ENCODE measurements at regions of chr1 and their contacts with region 1.

Region 1: GRCh38 chr1:21865943-21866706 is 54.1 kb downstream of the LDLRAD2 start:
- DNase-seq: no peak
- ATAC-seq: no peak
- H3K4me3 ChIP-seq: no peak overlapping the region
- H3K27ac ChIP-seq: no peak overlapping the region
- H3K4me1 ChIP-seq: peaks cover 17% of the 10 kb centered on the region
- H3K27me3 ChIP-seq: no peaks in the 10 kb centered on the region
- CTCF ChIP-seq: no peak
- POLR2A ChIP-seq: no peak
- RAD21 ChIP-seq: no peak

Region 2: GRCh38 chr1:21937372-21938221 is 71.5 kb after region 1 on chr1:
- CTCF ChIA-PET with region 1: no interaction called
- POLR2A ChIA-PET with region 1: no interaction called
- dilution Hi-C with region 1: no loop called
- in situ Hi-C with region 1: no loop called
- intact Hi-C with region 1: loop called (anchors 5 kb)
- DNase-seq: peak; percentile 78
- ATAC-seq: peak; percentile 86
- H3K4me3 ChIP-seq: peak overlapping the region; percentile 22
- H3K27ac ChIP-seq: peak overlapping the region; percentile 57
- H3K4me1 ChIP-seq: peaks cover 33% of the 10 kb centered on the region
- H3K27me3 ChIP-seq: no peaks in the 10 kb centered on the region
- CTCF ChIP-seq: no peak
- POLR2A ChIP-seq: 0 out of 2 replicates have a peak, but pooled peaks have one; percentile 14
- RAD21 ChIP-seq: no peak

Region 3: GRCh38 chr1:21956720-21957552 is 90.8 kb after region 1 on chr1:
- CTCF ChIA-PET with region 1: no interaction called
- POLR2A ChIA-PET with region 1: no interaction called
- dilution Hi-C with region 1: no loop called
- in situ Hi-C with region 1: no loop called
- intact Hi-C with region 1: loop called (anchors 2 kb)
- DNase-seq: peak; percentile 47
- ATAC-seq: peak; percentile 46
- H3K4me3 ChIP-seq: no peak overlapping the region
- H3K27ac ChIP-seq: no peak overlapping the region
- H3K4me1 ChIP-seq: peaks cover 11% of the 10 kb centered on the region
- H3K27me3 ChIP-seq: no peaks in the 10 kb centered on the region
- CTCF ChIP-seq: no peak
- POLR2A ChIP-seq: no peak
- RAD21 ChIP-seq: no peak